Posterior vena cava (tissue), 2 donors: ENCODE measurements at regions of chr12 and their contacts with region 1.

Region 1: GRCh38 chr12:52884526-52885293 is 20.2 kb downstream of the KRT8 start:
- DNase-seq: peak; percentile 91

Region 2: GRCh38 chr12:52924764-52925716 is 40.3 kb after region 1 on chr12:
- intact Hi-C with region 1: loop called in 1 of 2 experiments (anchors 5 kb)
- DNase-seq: no peak

Region 3: DNA sequence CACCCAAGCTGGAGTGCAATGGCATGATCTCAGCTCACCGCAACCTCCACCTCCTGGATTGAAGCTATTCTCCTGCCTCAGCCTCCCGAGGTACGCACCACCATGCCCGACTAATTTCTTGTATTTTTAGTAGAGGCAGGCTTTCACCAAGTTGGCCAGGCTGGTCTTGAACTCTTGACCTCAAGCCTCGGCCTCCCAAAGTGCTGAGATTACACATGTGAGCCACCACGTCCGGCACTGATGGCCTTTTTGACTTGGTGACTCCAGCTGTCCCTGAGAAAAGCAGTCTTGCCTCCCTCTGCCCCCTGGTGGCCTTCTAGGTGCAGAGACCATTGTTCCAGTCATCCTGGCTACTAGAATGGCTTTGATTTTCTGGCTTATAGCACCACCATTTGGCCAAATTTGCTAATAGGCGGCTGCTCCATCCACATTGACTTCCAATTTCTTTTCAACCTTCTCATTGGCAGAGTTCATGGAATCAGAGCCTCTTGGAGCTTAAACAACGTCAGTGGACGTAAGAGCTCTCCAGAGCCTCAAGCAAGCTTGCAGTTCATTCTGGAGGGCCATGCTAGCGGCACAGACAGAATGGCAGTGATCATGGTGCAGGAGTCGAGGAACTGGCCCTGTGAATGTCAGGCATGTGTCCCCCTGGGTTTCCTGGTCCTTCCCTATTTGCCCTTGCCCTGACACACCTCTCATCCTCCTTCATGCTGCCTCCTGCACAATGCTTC is 96.1 kb after region 1 on chr12:
- intact Hi-C with region 1: loop called (anchors 1 to 5 kb)
- DNase-seq: peak; percentile 94